ENCODE measurements at regions of chr6 and their contacts with region 1.

Region 1: DNA sequence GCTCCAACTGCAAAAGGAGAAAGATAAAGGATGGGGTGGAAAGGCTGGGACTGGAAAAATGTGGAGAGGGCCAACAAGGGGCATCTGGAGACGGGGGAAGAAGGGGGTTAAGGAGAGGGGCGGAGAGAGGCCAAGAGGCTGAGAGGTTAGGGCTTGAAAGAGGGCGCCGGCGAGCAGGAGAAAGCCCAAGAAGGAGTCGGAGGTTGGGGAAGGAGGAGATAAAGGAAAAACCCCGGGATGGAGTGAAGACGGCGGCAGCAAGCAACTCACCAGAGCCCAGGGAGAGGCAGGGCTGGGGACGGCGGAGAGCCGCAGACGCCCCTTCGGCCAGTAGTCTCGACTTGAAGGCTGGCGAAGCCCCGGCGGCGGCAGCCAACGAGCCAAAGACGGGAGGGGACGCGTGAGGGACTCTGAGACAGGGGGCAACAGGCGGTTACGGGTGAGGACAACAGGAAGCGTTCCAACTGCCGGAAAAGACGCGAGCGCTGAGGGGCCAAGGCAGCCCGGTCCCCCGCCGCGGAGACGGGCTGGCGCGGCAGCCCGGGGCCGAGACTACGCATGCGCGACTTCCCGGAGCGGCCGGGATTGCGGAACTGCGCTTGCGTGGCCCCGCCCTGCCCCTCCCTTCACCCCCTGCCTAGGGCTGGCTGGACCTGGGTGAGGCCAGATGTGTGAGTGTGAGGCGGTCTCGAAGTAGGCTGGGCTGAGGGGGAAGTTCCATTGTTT is at the start of gene STK38:
- DNase-seq: peak; percentile 95
- ATAC-seq: peak; percentile 89
- H3K4me3 Mint-ChIP-seq: peak within 1 kb of the TSS; percentile 97
- H3K27ac Mint-ChIP-seq: peak within 1 kb of the TSS; percentile 91
- H3K4me1 Mint-ChIP-seq: peaks cover 46% of the 10 kb centered on the region
- H3K27me3 Mint-ChIP-seq: no peaks in the 10 kb centered on the region
- total RNA-seq, gene STK38: 53.5 to 54.4 TPM

Region 2: DNA sequence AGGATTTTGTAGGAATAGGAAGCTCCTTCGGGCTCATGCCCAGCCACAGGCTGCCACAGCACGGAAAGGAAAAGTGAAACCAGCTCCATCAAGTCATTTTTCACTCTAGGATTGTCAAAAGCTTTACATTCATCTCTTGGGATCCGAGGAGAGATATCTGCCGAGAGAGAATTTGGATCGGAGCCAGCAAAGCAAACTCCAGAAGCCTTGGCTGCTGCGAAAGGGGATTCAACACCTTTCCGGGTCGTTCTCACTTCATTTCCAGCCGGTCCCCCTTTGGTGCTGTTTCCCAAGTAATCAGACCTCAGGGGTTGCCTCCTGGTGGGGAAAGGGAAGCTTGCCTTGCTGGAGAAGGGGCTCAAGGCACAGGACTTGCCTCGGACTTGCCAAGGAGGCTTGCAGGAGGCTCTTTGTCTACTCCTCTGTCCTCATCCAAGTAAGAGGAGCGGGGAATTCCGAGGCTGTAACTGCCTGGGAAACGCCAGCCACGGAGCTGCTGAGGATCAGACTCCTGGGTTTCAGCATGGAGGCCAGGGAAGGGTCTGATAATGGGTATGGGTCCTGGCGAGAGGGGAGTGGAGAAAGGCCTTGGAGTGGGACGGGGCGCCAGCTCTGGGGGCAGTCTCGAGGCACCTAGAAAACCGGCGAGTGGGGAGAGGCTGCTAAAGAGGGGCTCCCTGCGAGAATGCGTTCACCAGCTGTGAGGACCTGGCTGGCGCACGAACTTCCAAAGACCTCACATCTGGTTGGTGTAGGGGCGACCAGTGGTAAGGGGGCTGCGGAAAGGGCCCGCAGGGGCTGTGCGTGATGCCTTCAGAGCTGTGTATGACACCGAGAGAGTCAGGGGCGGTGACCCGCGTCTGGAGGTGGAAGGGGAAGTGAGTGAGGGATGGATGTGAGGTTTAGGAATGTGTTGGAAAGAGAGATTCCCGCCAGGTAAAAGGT is 160.3 kb before region 1 on chr6:
- CTCF ChIA-PET with region 1: no interaction called
- POLR2A ChIA-PET with region 1: no interaction called
- DNase-seq: peak; percentile 28
- ATAC-seq: peak; percentile 49
- H3K4me3 Mint-ChIP-seq: peak overlapping the region; percentile 79
- H3K27ac Mint-ChIP-seq: peak overlapping the region; percentile 68
- H3K4me1 Mint-ChIP-seq: peaks cover 23% of the 10 kb centered on the region
- H3K27me3 Mint-ChIP-seq: peaks cover 30% of the 10 kb centered on the region

Region 3: GRCh38 chr6:36432151-36432633 is 114.9 kb before region 1 on chr6:
- CTCF ChIA-PET with region 1: no interaction called
- POLR2A ChIA-PET with region 1: no interaction called
- DNase-seq: no peak
- ATAC-seq: no peak
- H3K4me3 Mint-ChIP-seq: no peak overlapping the region
- H3K27ac Mint-ChIP-seq: no peak overlapping the region
- H3K4me1 Mint-ChIP-seq: peaks cover 7% of the 10 kb centered on the region
- H3K27me3 Mint-ChIP-seq: peaks cover 4% of the 10 kb centered on the region

Region 4: GRCh38 chr6:36524871-36525270 is 22.2 kb before region 1 on chr6:
- CTCF ChIA-PET with region 1: no interaction called
- POLR2A ChIA-PET with region 1: no interaction called
- DNase-seq: no peak
- ATAC-seq: no peak
- H3K4me3 Mint-ChIP-seq: no peak overlapping the region
- H3K27ac Mint-ChIP-seq: no peak overlapping the region
- H3K4me1 Mint-ChIP-seq: peaks cover 29% of the 10 kb centered on the region
- H3K27me3 Mint-ChIP-seq: no peaks in the 10 kb centered on the region

Region 5: DNA sequence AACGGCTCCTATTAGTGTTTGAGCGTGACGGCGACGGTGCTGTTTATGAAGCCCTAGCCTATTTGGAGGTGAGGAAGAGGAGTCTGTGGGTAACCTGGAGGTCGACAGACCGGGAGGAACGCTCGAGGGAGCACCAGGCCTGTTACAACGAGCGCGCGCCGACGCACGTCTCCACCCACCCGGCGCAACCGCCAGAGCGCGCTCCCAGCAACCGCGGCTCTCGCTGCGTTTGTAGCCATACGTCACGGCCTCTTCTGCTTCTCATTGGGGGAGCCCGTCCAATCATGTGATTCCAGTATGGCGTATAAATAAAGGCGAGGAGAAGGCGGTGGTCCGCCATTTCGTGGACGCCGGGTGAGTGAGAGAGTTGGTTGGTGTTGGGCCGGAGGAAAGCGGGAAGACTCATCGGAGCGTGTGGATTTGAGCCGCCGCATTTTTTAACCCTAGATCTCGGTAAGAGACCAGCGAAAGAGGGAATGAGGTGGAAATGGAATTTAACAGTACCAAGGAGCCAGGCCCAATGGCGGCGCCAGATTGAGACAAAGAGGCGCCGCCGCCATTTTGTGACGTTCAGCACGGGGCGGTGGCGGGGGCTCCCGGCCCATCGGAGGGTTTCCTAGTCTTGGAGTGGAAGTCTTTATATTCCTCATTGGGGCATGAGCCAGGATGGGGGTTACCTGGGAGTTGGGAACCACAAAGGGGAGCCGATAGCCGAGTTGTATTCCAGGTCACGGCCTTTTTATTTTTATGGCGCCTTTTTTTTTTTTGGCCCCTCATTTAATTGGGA is 47.1 kb after region 1 on chr6 and contains the start of gene SRSF3:
- CTCF ChIA-PET with region 1: interaction called, 15 read pairs
- POLR2A ChIA-PET with region 1: interaction called, 109 read pairs
- DNase-seq: peak; percentile 98
- ATAC-seq: peak; percentile 88
- H3K4me3 Mint-ChIP-seq: peak within 1 kb of the TSS; percentile 90
- H3K27ac Mint-ChIP-seq: peak within 1 kb of the TSS; percentile 98
- H3K4me1 Mint-ChIP-seq: peaks cover 31% of the 10 kb centered on the region
- H3K27me3 Mint-ChIP-seq: no peaks in the 10 kb centered on the region
- total RNA-seq, gene SRSF3: 482 to 509 TPM

Region 6: DNA sequence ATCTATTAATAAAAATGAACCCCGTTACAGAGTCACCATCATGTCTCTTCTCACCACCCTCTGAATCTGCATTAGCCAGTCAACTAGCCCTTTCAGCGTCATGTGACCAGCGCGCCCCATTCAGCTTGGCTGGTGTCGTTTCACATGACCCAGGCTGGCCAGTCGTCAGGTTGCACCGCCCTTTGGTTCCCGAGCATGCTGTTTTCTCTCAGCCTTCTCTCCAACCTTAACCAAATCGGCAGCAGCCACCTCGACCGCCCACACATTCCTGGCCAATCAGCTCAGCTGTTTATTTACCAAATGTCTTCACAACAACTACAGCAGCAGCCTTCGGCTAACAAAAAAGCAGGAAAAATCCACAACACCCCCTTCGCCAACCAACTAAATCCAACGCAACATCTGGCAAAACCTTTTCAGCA is 52.7 kb after region 1 on chr6:
- CTCF ChIA-PET with region 1: interaction called, 15 read pairs
- POLR2A ChIA-PET with region 1: interaction called, 109 read pairs
- DNase-seq: peak; percentile 81
- ATAC-seq: peak; percentile 80
- H3K4me3 Mint-ChIP-seq: peak overlapping the region; percentile 90
- H3K27ac Mint-ChIP-seq: peak overlapping the region; percentile 79
- H3K4me1 Mint-ChIP-seq: peaks cover 63% of the 10 kb centered on the region
- H3K27me3 Mint-ChIP-seq: no peaks in the 10 kb centered on the region

Region 7: GRCh38 chr6:36862164-36862847 is 315.2 kb after region 1 on chr6:
- CTCF ChIA-PET with region 1: no interaction called
- POLR2A ChIA-PET with region 1: no interaction called
- DNase-seq: no peak
- ATAC-seq: no peak
- H3K4me3 Mint-ChIP-seq: no peak overlapping the region
- H3K27ac Mint-ChIP-seq: no peak overlapping the region
- H3K4me1 Mint-ChIP-seq: peaks cover 23% of the 10 kb centered on the region
- H3K27me3 Mint-ChIP-seq: no peaks in the 10 kb centered on the region

Measured in activated CD8-positive, alpha-beta T cell treated with anti-CD3 and anti-CD28 coated beads, Interleukin-2, amount 10 ng/mL, durations not matched to agents 7 days and 5 days (primary cell).